K562 (cell line): ENCODE measurements at regions of chr11 and their contacts with region 1.

Region 1: GRCh38 chr11:506238-506994 is 626 bp downstream of the RNH1 start:
- DNase-seq: peak; percentile 92 to 99 (median 94)
- ATAC-seq: peak; percentile 76
- H3K4me3 ChIP-seq: peak overlapping the region; percentile 93
- H3K27ac ChIP-seq: peak overlapping the region; percentile 98
- H3K4me1 ChIP-seq: peaks cover 11 to 58% of the 10 kb centered on the region in 2 experiments
- H3K27me3 ChIP-seq: no peaks in the 10 kb centered on the region
- CTCF ChIP-seq: 0 out of 6 replicates have a peak, but pooled peaks of 1 of the 3 experiments have one; percentile 10
- EP300 ChIP-seq: no peak
- POLR2A ChIP-seq: peak; percentile 95
- RAD21 ChIP-seq: peak in 1 of 2 experiments; percentile 9; a peak in 1 of 4 replicates

Region 2: GRCh38 chr11:460331-461199 is 45.9 kb before region 1 on chr11:
- CTCF ChIA-PET with region 1: no interaction called
- POLR2A ChIA-PET with region 1: interaction called, 9 read pairs
- in situ Hi-C with region 1: no loop called
- intact Hi-C with region 1: loop called (anchors 2 kb)
- DNase-seq: peak; percentile 70 to 95 (median 82)
- ATAC-seq: peak; percentile 96
- H3K4me3 ChIP-seq: peak overlapping the region; percentile 16; the same call in 1 of the 2 replicates
- H3K27ac ChIP-seq: peak overlapping the region; percentile 81
- H3K4me1 ChIP-seq: peaks cover 27 to 55% of the 10 kb centered on the region in 2 experiments
- H3K27me3 ChIP-seq: no peaks in the 10 kb centered on the region
- CTCF ChIP-seq: peak in 1 of 3 experiments; percentile 23; a peak in 1 of 6 replicates
- EP300 ChIP-seq: peak; percentile 78
- POLR2A ChIP-seq: no peak
- RAD21 ChIP-seq: peak in 1 of 2 experiments; percentile 23; a peak in 1 of 4 replicates

Region 3: DNA sequence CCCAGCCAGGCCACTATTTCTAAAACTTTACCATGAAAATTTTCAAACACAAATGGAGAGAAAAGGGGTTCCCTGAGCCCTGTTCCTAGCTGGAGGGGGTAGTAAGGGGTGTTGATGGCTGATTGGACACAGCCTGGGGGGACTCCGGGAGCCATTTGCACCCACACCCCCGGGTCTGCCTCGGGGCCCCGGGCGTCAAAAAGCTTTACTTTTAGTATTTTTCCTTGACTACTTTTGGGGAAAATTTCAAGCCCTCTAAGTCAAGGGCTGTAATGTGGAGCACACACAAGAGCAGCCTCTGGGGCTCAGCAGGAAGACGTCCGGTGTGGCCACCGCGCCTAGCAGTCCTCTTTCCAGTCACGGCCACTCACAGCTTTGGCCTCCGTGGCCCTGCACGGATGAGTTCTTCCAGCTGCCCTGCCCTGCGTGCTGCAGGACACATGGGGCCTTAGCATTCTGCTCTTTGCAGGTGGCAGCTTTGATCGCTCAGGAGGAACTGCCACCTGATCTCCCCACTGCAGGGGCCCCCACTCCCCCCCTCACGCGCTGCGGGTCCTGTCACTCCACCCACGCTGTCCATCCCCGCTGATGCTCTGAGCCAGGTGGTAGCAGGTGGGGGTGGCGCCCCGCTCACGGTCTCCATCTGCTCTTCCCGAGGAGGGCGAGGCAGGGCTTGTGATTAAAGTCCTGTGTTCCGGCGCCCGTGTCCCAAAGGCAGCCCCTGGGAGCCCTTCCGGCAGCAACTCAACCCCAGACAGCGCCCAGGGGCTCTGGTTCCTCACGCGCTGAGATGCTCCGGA is 13.8 kb before region 1 on chr11:
- CTCF ChIA-PET with region 1: no interaction called
- POLR2A ChIA-PET with region 1: interaction called, 13 read pairs
- in situ Hi-C with region 1: no loop called
- intact Hi-C with region 1: no loop called
- DNase-seq: no peak
- ATAC-seq: peak; percentile 32
- H3K4me3 ChIP-seq: no peak overlapping the region
- H3K27ac ChIP-seq: no peak overlapping the region
- H3K4me1 ChIP-seq: peaks cover 0 to 37% of the 10 kb centered on the region in 2 experiments; a peak in 2 of 5 replicates
- H3K27me3 ChIP-seq: no peaks in the 10 kb centered on the region
- CTCF ChIP-seq: no peak
- EP300 ChIP-seq: no peak
- POLR2A ChIP-seq: 0 out of 2 replicates have a peak, but pooled peaks have one; percentile 3
- RAD21 ChIP-seq: no peak